OCI-LY7 (cell line): ENCODE measurements at regions of chr1 and their contacts with region 1.

Region 1: GRCh38 chr1:54844564-54844963 is 42.4 kb downstream of the DHCR24 start:
- DNase-seq: no peak
- H3K4me3 ChIP-seq: no peak overlapping the region
- H3K27ac ChIP-seq: no peak overlapping the region
- H3K4me1 ChIP-seq: no peaks in the 10 kb centered on the region
- CTCF ChIP-seq: no peak

Region 2: DNA sequence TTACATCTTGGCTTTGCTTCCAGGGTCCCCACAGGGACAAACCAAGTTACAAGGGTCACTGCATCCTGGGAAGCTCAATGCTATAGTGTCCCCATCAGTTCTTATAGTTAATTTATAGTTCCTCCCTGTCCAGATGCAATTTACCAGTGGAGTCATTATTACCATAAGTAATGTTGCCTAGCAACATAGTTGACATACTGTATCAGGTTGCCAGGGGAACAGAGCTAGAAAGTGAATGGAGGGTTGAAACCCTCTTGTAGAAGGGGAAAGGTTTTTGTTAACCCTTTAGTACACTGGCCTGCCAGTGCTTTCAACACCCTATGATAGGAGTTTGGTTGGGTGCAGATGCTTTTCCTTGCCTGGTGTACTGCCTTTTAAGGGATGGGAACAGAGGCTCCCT is 163.2 kb before region 1 on chr1:
- CTCF ChIA-PET with region 1: no interaction called
- POLR2A ChIA-PET with region 1: no interaction called
- intact Hi-C with region 1: no loop called
- DNase-seq: no peak
- H3K4me3 ChIP-seq: no peak overlapping the region
- H3K27ac ChIP-seq: no peak overlapping the region
- H3K4me1 ChIP-seq: no peaks in the 10 kb centered on the region
- CTCF ChIP-seq: no peak

Region 3: GRCh38 chr1:54922921-54923531 is 78.5 kb after region 1 on chr1:
- CTCF ChIA-PET with region 1: no interaction called
- POLR2A ChIA-PET with region 1: interaction called, 12 read pairs
- intact Hi-C with region 1: no loop called
- DNase-seq: no peak
- H3K4me3 ChIP-seq: no peak overlapping the region
- H3K27ac ChIP-seq: no peak overlapping the region
- H3K4me1 ChIP-seq: no peaks in the 10 kb centered on the region
- CTCF ChIP-seq: no peak

Region 4: DNA sequence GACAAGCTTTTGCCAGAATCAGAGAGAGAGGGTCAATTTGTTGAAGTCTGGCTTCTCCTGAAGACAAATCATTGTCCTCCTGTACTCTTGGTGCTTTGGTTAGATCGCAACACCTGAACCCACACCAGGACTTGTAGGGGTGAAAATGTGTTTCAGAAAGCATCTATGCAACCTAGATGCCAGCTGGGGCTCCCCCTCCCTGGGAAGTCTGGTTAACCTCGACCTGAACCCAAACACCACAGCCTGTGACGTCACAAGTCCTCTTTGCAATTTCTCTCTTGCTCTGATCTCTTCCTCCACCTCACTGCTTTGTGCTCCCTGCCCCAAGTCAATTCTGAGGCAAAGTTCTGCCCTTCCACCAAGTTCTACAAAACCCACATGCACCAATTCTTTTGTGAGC is 413.4 kb after region 1 on chr1:
- CTCF ChIA-PET with region 1: no interaction called
- POLR2A ChIA-PET with region 1: no interaction called
- intact Hi-C with region 1: no loop called
- DNase-seq: peak; percentile 9
- H3K4me3 ChIP-seq: no peak overlapping the region
- H3K27ac ChIP-seq: no peak overlapping the region
- H3K4me1 ChIP-seq: peaks cover 45% of the 10 kb centered on the region
- CTCF ChIP-seq: no peak